Posterior vena cava (tissue), 2 donors: ENCODE measurements at regions of chr17 and their contacts with region 1.

Region 1: DNA sequence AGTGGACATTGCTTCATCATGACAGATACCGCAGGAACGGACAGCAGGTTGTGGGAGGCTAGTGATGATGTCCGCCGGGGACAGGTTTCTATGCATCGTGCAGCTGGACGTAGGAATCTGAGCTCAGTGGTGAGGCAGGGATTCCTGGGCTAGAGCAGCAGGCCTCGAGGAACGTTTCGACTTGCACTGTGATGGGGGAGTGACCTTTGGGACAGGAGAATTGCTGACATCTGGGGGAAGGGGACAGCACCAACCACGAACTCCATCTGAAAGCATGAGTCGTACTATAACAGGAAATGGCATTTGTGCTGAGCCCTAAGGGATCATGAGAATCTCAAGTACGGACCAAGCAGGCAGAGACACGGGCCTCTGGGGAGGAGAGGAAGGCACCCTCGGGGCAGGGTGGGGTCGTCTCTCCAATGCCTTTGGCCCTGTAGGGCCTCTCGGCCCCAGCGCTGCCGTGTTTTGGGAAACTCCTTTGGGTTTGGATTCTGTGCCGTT is 65.8 kb upstream of the ENDOV start:
- DNase-seq: peak; percentile 73

Region 2: DNA sequence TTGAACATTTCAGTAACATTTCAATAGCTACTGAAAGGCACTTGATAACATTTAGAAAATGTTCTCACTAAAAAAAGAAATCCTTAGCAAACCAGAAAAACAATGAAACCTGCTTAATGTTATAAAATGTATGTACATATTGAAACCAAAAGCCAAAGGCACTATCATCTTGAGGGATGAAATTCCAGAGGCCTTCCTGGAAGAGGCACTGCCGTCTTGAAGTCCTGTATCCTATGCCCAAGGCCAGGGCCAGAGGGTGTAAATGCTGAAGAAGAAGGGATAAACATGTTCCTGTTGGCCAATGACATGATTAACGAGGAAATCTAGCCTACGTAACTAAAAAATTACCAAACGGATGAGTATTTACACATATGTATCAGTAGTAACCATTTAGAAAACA is 1715.0 kb before region 1 on chr17:
- intact Hi-C with region 1: loop called in 1 of 2 experiments (anchors 5 kb)
- DNase-seq: no peak

Region 3: GRCh38 chr17:80307994-80308691 is 41.1 kb before region 1 on chr17:
- intact Hi-C with region 1: loop called in 1 of 2 experiments (anchors 1 kb)
- DNase-seq: peak; percentile 29

Region 4: DNA sequence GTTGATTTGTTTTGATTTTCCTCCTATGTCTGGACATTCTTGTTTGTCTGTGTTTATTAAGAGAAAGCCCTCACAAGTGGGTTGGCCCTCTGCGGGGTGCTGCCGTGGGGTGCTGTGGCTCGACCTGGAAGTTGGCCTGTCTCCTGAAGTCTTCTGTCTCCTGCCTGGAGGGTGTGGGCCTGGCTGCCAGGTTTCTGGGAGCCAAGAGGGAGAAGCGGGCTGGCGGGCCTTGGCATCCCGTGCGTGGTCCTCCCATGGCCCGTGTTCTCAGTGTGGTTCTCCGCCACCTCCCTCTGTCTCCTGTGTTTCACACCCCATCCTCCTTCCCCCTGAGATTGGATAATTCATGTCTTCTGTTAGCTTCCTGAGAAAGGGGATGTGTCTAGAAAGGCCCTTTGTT is 18.9 kb before region 1 on chr17:
- intact Hi-C with region 1: loop called in 1 of 2 experiments (anchors 1 kb)
- DNase-seq: no peak

Region 5: GRCh38 chr17:80491478-80492342 is 142.5 kb after region 1 on chr17:
- intact Hi-C with region 1: no loop called
- DNase-seq: no peak